K562 (cell line): ENCODE measurements at regions of chr1 and their contacts with region 1.

Region 1: DNA sequence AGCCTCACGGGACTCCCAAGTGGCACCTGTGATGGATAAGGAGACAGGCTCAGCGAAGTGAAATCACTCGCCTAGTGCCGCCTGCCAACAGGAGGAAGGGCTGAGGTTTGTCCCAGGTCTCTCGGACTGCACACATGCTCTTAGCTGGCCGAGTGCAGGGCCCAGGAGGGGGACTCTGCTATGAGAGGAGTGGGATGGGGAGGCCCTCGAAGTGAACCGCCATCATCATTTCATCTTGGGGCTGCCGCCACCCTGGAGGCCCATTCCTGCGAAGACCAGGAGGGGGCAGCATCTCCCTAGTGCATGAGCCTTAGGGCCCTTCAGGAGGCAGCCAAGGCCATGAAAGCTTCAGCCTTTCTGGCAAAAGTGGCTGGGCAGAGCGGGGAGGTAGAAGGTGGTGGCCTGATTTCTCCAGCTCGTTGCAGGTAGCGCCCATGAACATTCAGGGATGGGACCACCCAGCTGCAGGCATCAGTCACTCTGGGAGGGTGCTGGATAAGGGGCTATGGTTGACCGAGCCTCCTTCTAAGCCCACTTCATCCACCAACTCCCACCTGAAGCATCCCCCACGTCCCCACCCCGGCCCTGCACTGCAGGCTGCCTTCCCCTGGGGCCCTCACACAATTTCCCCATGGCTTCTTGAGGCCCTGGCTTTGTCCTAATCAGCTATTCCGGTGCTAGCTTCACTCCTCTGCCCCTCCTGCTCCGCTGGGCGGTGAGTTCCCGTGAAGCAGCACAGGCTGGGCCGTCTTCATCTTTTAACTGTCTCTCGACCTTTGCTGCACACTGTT is 17.2 kb upstream of the RASSF5 start:
- DNase-seq: peak; percentile 90 to 94 (median 92)
- ATAC-seq: peak; percentile 96
- H3K4me3 ChIP-seq: no peak overlapping the region
- H3K27ac ChIP-seq: no peak overlapping the region
- H3K4me1 ChIP-seq: peaks cover 19 to 31% of the 10 kb centered on the region in 2 experiments
- H3K27me3 ChIP-seq: no peaks in the 10 kb centered on the region
- CTCF ChIP-seq: peak; percentile 99
- EP300 ChIP-seq: no peak
- POLR2A ChIP-seq: no peak
- RAD21 ChIP-seq: peak; percentile 98 to 99

Region 2: GRCh38 chr1:206449622-206450021 is 40.6 kb before region 1 on chr1:
- CTCF ChIA-PET with region 1: no interaction called
- POLR2A ChIA-PET with region 1: no interaction called
- in situ Hi-C with region 1: no loop called
- intact Hi-C with region 1: no loop called
- DNase-seq: no peak
- ATAC-seq: no peak
- H3K4me3 ChIP-seq: no peak overlapping the region
- H3K27ac ChIP-seq: no peak overlapping the region
- H3K4me1 ChIP-seq: peaks cover 6% of the 10 kb centered on the region in 2 experiments; a peak in 4 of 5 replicates
- H3K27me3 ChIP-seq: no peaks in the 10 kb centered on the region
- CTCF ChIP-seq: no peak
- EP300 ChIP-seq: no peak
- POLR2A ChIP-seq: no peak
- RAD21 ChIP-seq: no peak

Region 3: DNA sequence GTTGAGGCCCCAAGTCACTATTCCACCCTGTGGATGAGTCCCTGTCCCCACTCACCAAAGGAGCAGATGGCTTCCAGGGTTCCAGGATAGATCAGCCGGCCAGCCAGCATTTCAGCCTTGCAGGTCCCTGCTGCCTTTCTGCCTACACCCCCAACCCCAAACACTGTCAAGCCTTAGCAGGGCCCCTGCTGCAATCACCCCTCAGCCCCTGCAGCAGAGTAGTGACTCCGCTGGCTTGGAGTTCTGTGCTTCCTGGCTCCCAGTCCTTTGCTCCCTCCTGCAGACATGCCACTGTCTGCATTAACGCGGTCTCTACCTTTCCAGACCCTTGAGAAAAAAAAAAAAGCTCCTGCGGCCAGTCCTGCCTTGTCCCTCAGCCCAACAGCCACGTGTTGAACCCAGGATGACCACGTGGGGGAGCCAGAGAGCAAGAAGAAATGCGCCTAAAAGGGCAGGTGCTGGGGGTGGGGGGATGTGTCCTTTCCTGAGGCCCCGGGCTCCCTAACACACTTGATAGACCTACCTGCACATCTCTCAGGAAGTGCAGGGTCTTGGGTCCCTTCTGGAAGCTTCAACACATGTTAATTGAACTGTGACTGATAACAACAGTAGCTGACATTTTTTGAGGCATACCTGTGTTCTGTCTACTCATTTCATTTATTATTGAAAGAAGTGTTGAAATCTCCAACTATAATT is 54.5 kb after region 1 on chr1:
- CTCF ChIA-PET with region 1: interaction called, 3 read pairs
- POLR2A ChIA-PET with region 1: no interaction called
- in situ Hi-C with region 1: no loop called
- intact Hi-C with region 1: loop called (anchors 1 kb)
- DNase-seq: peak; percentile 88 to 94 (median 92)
- ATAC-seq: peak; percentile 98
- H3K4me3 ChIP-seq: no peak overlapping the region
- H3K27ac ChIP-seq: no peak overlapping the region
- H3K4me1 ChIP-seq: peaks cover 7% of the 10 kb centered on the region in 2 experiments; a peak in 4 of 5 replicates
- H3K27me3 ChIP-seq: no peaks in the 10 kb centered on the region
- CTCF ChIP-seq: peak; percentile 95 to 98 (median 96)
- EP300 ChIP-seq: no peak
- POLR2A ChIP-seq: no peak
- RAD21 ChIP-seq: peak; percentile 87 to 95

Region 4: DNA sequence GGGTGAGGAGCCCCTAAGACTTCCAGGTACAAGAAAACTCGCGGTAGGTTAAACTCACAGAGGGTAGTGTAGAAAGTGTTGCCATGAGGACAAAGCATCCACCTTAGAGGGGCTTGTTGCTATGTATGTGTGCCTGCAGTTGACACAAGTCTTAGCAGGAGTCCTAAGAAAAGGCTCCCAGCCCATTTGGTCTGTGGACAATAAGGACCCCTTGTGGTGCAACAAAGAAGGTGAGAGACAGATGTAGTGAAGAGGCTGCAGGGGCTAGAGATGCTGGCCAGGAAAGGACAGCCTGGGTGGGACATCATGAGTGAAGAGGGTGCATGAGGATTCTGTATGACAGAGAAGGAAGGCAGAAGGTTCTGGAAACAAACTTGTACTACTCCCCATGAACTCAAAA is 318.4 kb after region 1 on chr1:
- CTCF ChIA-PET with region 1: no interaction called
- POLR2A ChIA-PET with region 1: no interaction called
- in situ Hi-C with region 1: no loop called
- intact Hi-C with region 1: loop called (anchors 10 kb)
- DNase-seq: peak; percentile 30 to 71 (median 48)
- ATAC-seq: peak; percentile 97
- H3K4me3 ChIP-seq: no peak overlapping the region
- H3K27ac ChIP-seq: no peak overlapping the region
- H3K4me1 ChIP-seq: no peaks in the 10 kb centered on the region
- H3K27me3 ChIP-seq: peaks cover 5 to 13% of the 10 kb centered on the region in 2 experiments; a peak in 3 of 5 replicates
- CTCF ChIP-seq: peak; percentile 75 to 81 (median 77)
- EP300 ChIP-seq: no peak
- POLR2A ChIP-seq: no peak
- RAD21 ChIP-seq: peak; percentile 92 to 95